Activated T-helper 1 cell treated with anti-CD3 and anti-CD28 coated beads, Interleukin-12 subunit alpha, Interleukin-12 subunit beta, Interleukin-2, Interleukin-4 antibody, amounts not matched to agents 30 ng/mL and 10 ng/mL and 1 ng/mL, durations not matched to agents 14 hours and 24 hours and 36 hours (primary cell): ENCODE measurements at regions of chr4 and their contacts with region 1.

Region 1: GRCh38 chr4:77852892-77853495 is 9.6 kb upstream of the MRPL1 start:
- DNase-seq: peak; percentile 72
- H3K4me3 Mint-ChIP-seq: peak overlapping the region; percentile 56
- H3K27ac Mint-ChIP-seq: peak overlapping the region; percentile 93
- H3K4me1 Mint-ChIP-seq: peaks cover 56% of the 10 kb centered on the region
- H3K27me3 Mint-ChIP-seq: no peaks in the 10 kb centered on the region

Region 2: GRCh38 chr4:77629885-77630284 is 223.1 kb before region 1 on chr4:
- intact Hi-C with region 1: loop called (anchors 10 kb)
- DNase-seq: no peak
- H3K4me3 Mint-ChIP-seq: no peak overlapping the region
- H3K27ac Mint-ChIP-seq: peak overlapping the region; percentile 12
- H3K4me1 Mint-ChIP-seq: peaks cover 22% of the 10 kb centered on the region
- H3K27me3 Mint-ChIP-seq: no peaks in the 10 kb centered on the region

Region 3: GRCh38 chr4:77734928-77735327 is 118.1 kb before region 1 on chr4:
- intact Hi-C with region 1: loop called (anchors 2 kb)
- DNase-seq: peak; percentile 50
- H3K4me3 Mint-ChIP-seq: peak overlapping the region; percentile 67
- H3K27ac Mint-ChIP-seq: peak overlapping the region; percentile 49
- H3K4me1 Mint-ChIP-seq: peaks cover 79% of the 10 kb centered on the region
- H3K27me3 Mint-ChIP-seq: no peaks in the 10 kb centered on the region

Region 4: DNA sequence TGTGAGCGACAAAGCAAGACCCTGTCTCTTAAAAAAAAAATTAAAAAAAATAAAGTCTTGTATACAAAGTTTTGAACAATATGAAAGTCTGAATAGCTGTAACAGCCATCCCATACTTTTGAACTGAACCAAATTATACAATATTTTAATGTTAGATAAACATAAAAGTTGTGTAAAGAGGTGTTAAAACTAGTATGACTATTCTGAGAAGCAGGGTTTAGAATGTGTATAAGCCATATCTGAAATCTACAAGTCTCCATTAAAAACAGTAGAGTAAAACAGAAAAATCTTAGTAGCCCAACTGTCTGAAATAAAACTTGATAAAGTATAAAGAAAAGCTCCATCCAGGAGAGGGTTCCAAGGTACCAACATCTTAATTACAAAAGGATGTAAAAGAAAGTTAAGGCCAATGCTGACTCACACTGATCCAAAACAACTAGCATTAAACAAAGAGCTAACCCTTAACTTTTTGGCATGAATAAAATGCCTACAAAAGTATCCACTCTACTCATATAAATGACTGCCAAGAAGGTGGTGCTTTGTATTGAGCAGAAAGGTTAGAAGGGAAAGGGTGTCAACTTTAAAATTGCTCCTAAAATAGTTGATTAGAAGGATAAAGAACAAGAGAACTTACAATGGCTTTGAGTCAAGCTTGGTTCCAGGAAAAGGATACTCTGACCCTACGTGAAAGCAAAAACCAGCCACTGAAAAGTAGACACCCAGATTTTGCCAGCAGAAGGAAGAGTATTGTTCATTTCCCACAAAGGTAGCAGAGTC is 52.3 kb before region 1 on chr4:
- intact Hi-C with region 1: loop called (anchors 1 kb)
- DNase-seq: no peak
- H3K4me3 Mint-ChIP-seq: peak overlapping the region; percentile 48
- H3K27ac Mint-ChIP-seq: peak overlapping the region; percentile 69
- H3K4me1 Mint-ChIP-seq: peaks cover 38% of the 10 kb centered on the region
- H3K27me3 Mint-ChIP-seq: no peaks in the 10 kb centered on the region

Region 5: DNA sequence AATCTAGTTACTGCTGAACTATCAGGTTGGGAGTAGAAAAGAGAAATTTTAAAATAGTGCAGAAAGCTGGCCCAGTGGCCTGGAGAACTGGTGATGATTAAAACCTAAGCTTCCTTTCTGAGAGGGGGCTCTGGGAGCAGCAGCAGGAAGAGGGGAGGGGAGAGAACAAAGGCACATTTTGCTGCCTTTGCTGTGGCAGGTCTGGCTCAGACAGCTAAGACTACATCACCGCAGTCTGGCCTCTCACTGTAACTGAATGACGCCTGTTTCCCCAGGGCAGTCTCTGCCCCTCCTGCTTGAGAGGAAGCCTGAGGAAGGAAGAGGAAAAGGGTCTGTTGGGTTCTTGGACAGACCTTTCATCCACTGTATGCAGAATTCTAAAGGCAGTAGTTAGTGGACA is 352.6 kb after region 1 on chr4:
- intact Hi-C with region 1: no loop called
- DNase-seq: no peak
- H3K4me3 Mint-ChIP-seq: no peak overlapping the region
- H3K27ac Mint-ChIP-seq: no peak overlapping the region
- H3K4me1 Mint-ChIP-seq: no peaks in the 10 kb centered on the region
- H3K27me3 Mint-ChIP-seq: peaks cover 2% of the 10 kb centered on the region